CD4-positive, alpha-beta memory T cell (primary cell): ENCODE measurements at regions of chr9 and their contacts with region 1.

Region 1: GRCh38 chr9:126690431-126691350 is 77.0 kb downstream of the LMX1B start:
- DNase-seq: peak in 4 of 5 donors; percentile 27 to 37 (median 32)
- H3K4me3 ChIP-seq: no peak overlapping the region
- H3K4me3 Mint-ChIP-seq: no peak overlapping the region
- H3K27ac ChIP-seq: no peak overlapping the region
- H3K27ac Mint-ChIP-seq: no peak overlapping the region
- H3K4me1 ChIP-seq: no peaks in the 10 kb centered on the region
- H3K4me1 Mint-ChIP-seq: no peaks in the 10 kb centered on the region
- H3K27me3 ChIP-seq: no peaks in the 10 kb centered on the region
- H3K27me3 Mint-ChIP-seq: peaks cover 26 to 33% of the 10 kb centered on the region in 2 donors

Region 2: GRCh38 chr9:126611592-126612325 is 78.9 kb before region 1 on chr9:
- CTCF ChIA-PET with region 1: no interaction called
- POLR2A ChIA-PET with region 1: no interaction called
- intact Hi-C with region 1: loop called (anchors 1 kb)
- DNase-seq: peak; percentile 48 to 61 (median 55)
- H3K4me3 ChIP-seq: peak overlapping the region in 1 of 2 donors; percentile 35
- H3K4me3 Mint-ChIP-seq: peak overlapping the region; percentile 64 to 86 (median 79)
- H3K27ac ChIP-seq: no peak overlapping the region
- H3K27ac Mint-ChIP-seq: peak overlapping the region in 3 of 7 donors; percentile 11 to 52 (median 26)
- H3K4me1 ChIP-seq: peaks cover 31% of the 10 kb centered on the region
- H3K4me1 Mint-ChIP-seq: peaks cover 15 to 30% (median 21%) of the 10 kb centered on the region in 4 donors
- H3K27me3 ChIP-seq: peaks cover 31% of the 10 kb centered on the region
- H3K27me3 Mint-ChIP-seq: peaks cover 51 to 53% of the 10 kb centered on the region in 2 donors

Region 3: GRCh38 chr9:126733005-126733404 is 42.3 kb after region 1 on chr9:
- CTCF ChIA-PET with region 1: no interaction called
- POLR2A ChIA-PET with region 1: no interaction called
- intact Hi-C with region 1: no loop called
- DNase-seq: no peak
- H3K4me3 ChIP-seq: no peak overlapping the region
- H3K4me3 Mint-ChIP-seq: no peak overlapping the region
- H3K27ac ChIP-seq: no peak overlapping the region
- H3K27ac Mint-ChIP-seq: no peak overlapping the region
- H3K4me1 ChIP-seq: no peaks in the 10 kb centered on the region
- H3K4me1 Mint-ChIP-seq: no peaks in the 10 kb centered on the region
- H3K27me3 ChIP-seq: no peaks in the 10 kb centered on the region
- H3K27me3 Mint-ChIP-seq: peaks cover 0 to 3% of the 10 kb centered on the region in 2 donors

Region 4: GRCh38 chr9:126781186-126782052 is 90.7 kb after region 1 on chr9:
- CTCF ChIA-PET with region 1: interaction called, 11 read pairs
- POLR2A ChIA-PET with region 1: no interaction called
- intact Hi-C with region 1: no loop called
- DNase-seq: peak; percentile 68 to 79 (median 76)
- H3K4me3 ChIP-seq: no peak overlapping the region
- H3K4me3 Mint-ChIP-seq: no peak overlapping the region
- H3K27ac ChIP-seq: no peak overlapping the region
- H3K27ac Mint-ChIP-seq: no peak overlapping the region
- H3K4me1 ChIP-seq: peaks cover 5% of the 10 kb centered on the region
- H3K4me1 Mint-ChIP-seq: peaks cover 0 to 4% (median 2%) of the 10 kb centered on the region in 4 donors
- H3K27me3 ChIP-seq: no peaks in the 10 kb centered on the region
- H3K27me3 Mint-ChIP-seq: peaks cover 11 to 23% of the 10 kb centered on the region in 2 donors

Region 5: GRCh38 chr9:128127990-128128835 is 1437.5 kb after region 1 on chr9:
- CTCF ChIA-PET with region 1: no interaction called
- POLR2A ChIA-PET with region 1: no interaction called
- intact Hi-C with region 1: no loop called
- DNase-seq: peak; percentile 90 to 94 (median 93)
- H3K4me3 ChIP-seq: peak overlapping the region; percentile 86 to 95
- H3K4me3 Mint-ChIP-seq: peak overlapping the region; percentile 96 to 100 (median 99)
- H3K27ac ChIP-seq: peak overlapping the region; percentile 81
- H3K27ac Mint-ChIP-seq: peak overlapping the region; percentile 98 to 100 (median 99)
- H3K4me1 ChIP-seq: peaks cover 37% of the 10 kb centered on the region
- H3K4me1 Mint-ChIP-seq: peaks cover 24 to 46% (median 33%) of the 10 kb centered on the region in 4 donors
- H3K27me3 ChIP-seq: no peaks in the 10 kb centered on the region
- H3K27me3 Mint-ChIP-seq: peaks cover 0 to 2% of the 10 kb centered on the region in 2 donors